GM13977 (cell line): ENCODE measurements at regions of chr2 and their contacts with region 1.

Region 1: GRCh38 chr2:76599732-76600368 is 889.1 kb upstream of the GCFC2 start:
- DNase-seq: peak; percentile 65
- CTCF ChIP-seq: peak; percentile 83

Region 2: GRCh38 chr2:75787532-75788132 is 812.2 kb before region 1 on chr2:
- in situ Hi-C with region 1: loop called (anchors 25 kb)
- DNase-seq: peak; percentile 22
- CTCF ChIP-seq: peak; percentile 43

Region 3: GRCh38 chr2:76211991-76212985 is 387.6 kb before region 1 on chr2:
- in situ Hi-C with region 1: loop called (anchors 25 kb)
- DNase-seq: no peak
- CTCF ChIP-seq: no peak

Region 4: GRCh38 chr2:76752506-76752905 is 152.7 kb after region 1 on chr2:
- in situ Hi-C with region 1: no loop called
- DNase-seq: no peak
- CTCF ChIP-seq: no peak